Activated CD4-positive, alpha-beta T cell treated with anti-CD3 and anti-CD28 coated beads, Interleukin-2, amount 10 ng/mL, durations not matched to agents 24 days and 14 days (primary cell): ENCODE measurements at regions of chr3 and their contacts with region 1.

Region 1: GRCh38 chr3:192816351-192816750 is 89.0 kb upstream of the FGF12 start:
- DNase-seq: peak; percentile 68
- H3K4me3 Mint-ChIP-seq: no peak overlapping the region
- H3K27ac Mint-ChIP-seq: peak overlapping the region; percentile 26
- H3K4me1 Mint-ChIP-seq: peaks cover 52% of the 10 kb centered on the region
- H3K27me3 Mint-ChIP-seq: peaks cover 2% of the 10 kb centered on the region

Region 2: DNA sequence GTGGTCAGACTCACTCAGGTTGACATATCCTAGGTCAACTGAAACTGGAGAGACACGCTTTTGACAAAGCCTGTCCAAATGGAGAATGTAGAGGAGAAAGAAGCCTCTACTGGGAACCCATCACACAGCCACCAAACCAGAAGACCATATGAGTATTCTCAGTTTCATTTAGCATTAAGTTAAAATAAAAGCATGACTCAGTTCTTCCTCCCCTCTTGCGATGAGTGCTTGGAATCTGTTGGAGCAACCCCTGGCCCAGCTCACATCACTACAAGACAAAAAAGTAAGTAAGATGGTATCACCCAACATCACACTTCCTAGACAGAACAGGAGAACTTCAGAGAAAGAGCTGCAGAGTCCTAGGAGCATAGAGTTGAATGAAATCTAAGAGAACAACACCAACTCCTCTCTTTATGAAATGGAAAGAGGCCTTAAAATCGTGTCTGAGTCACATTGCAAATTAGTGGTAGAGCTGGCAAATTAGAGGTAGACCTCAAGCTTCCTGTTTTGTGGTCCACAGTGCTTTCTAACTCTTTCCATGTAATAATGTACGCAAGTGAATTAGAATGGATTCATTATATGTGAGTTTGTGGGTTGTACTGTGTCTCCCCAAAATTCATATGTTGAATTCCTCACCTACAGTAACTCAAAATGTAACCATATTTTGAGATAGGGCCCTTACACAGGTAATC is 140.2 kb before region 1 on chr3:
- intact Hi-C with region 1: loop called (anchors 1 kb)
- DNase-seq: peak; percentile 57
- H3K4me3 Mint-ChIP-seq: peak overlapping the region; percentile 36
- H3K27ac Mint-ChIP-seq: peak overlapping the region; percentile 94
- H3K4me1 Mint-ChIP-seq: peaks cover 7% of the 10 kb centered on the region
- H3K27me3 Mint-ChIP-seq: peaks cover 14% of the 10 kb centered on the region

Region 3: GRCh38 chr3:192851821-192852424 is 35.6 kb after region 1 on chr3:
- intact Hi-C with region 1: loop called (anchors 1 kb)
- DNase-seq: no peak
- H3K4me3 Mint-ChIP-seq: no peak overlapping the region
- H3K27ac Mint-ChIP-seq: peak overlapping the region; percentile 27
- H3K4me1 Mint-ChIP-seq: peaks cover 45% of the 10 kb centered on the region
- H3K27me3 Mint-ChIP-seq: no peaks in the 10 kb centered on the region

Region 4: DNA sequence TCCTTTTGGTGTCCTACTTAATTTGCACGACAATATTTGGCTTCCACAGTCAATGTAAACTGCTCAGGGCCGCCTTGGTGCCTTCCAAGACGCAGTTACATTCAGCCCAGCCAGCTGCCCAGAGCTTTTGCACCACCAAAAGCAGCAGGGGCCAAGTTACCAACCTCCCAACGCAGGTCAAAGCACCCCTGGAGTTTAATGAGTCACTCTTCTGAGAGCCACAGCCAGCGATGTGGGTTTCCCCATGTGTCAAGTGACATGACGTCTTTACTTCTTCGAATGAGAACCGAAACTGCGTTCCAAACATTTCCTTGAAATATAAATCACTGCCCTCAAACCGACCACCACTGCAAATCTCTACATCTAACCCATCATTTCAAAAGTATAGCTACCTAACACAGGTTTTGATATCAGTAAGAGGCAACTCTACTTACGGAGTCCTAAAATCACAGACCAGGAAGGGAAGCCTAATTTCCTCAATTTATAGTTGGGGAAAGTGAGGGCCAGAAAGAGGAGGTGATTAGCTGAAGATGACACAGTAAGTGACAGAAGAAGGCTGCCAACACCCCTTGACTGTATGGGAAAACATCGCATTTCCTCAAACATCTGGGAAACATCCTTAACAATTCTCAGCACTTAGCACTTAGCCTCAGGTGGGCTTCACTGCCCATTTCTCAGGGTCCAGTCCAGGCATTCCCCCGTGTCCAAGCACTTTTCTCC is 76.8 kb after region 1 on chr3:
- intact Hi-C with region 1: loop called (anchors 1 kb)
- DNase-seq: peak; percentile 94
- H3K4me3 Mint-ChIP-seq: peak overlapping the region; percentile 62
- H3K27ac Mint-ChIP-seq: peak overlapping the region; percentile 84
- H3K4me1 Mint-ChIP-seq: peaks cover 81% of the 10 kb centered on the region
- H3K27me3 Mint-ChIP-seq: peaks cover 20% of the 10 kb centered on the region

Region 5: DNA sequence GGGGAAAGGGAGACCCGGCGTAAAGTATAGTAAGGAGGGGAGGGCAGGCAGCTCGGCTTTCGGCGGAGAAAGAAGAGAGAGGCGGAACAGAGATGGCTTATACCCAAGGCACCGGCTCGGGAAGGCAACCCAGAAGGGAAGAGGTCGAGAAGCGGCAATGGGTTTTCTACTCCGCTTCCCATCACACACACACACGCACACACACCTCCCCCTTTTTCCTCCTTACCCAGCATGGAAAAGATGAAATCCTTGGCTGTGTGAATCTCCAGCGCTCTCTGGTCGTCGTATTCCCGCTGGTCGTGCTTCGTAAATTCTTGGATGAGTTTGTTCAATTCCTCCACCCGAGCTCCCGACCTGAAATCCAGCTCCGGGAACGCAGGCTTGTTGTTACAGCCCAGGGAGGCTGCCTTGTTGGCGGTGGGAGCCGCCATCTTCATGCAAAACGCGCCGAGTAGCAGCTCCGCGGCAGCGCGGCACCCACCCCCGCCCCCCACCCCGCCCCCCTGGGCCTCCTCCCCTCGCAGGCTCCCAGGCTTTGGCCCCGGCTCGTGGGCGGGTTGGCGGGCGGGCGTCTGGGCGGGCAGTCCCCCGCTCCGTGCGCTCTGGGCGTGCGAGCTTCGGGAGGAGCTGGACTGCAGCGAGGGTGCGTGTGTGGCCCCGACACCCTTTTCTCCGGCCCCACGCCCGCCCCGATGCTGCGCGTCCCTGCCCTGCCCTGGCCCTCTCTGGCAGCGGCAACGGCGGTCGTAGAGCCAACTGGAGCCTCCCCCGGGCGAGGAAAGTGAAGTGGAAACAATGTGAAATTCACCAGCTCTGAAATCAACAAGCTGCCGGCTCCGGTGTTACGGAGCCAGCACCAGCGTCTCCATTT is 101.3 kb after region 1 on chr3 and contains the start of gene MB21D2:
- intact Hi-C with region 1: loop called (anchors 1 kb)
- DNase-seq: peak; percentile 91
- H3K4me3 Mint-ChIP-seq: peak within 1 kb of the TSS; percentile 96
- H3K27ac Mint-ChIP-seq: peak within 1 kb of the TSS; percentile 92
- H3K4me1 Mint-ChIP-seq: peaks cover 46% of the 10 kb centered on the region
- H3K27me3 Mint-ChIP-seq: peaks cover 49% of the 10 kb centered on the region
- total RNA-seq, gene MB21D2: 8.6 and 9.4 TPM in 2 replicates

Region 6: DNA sequence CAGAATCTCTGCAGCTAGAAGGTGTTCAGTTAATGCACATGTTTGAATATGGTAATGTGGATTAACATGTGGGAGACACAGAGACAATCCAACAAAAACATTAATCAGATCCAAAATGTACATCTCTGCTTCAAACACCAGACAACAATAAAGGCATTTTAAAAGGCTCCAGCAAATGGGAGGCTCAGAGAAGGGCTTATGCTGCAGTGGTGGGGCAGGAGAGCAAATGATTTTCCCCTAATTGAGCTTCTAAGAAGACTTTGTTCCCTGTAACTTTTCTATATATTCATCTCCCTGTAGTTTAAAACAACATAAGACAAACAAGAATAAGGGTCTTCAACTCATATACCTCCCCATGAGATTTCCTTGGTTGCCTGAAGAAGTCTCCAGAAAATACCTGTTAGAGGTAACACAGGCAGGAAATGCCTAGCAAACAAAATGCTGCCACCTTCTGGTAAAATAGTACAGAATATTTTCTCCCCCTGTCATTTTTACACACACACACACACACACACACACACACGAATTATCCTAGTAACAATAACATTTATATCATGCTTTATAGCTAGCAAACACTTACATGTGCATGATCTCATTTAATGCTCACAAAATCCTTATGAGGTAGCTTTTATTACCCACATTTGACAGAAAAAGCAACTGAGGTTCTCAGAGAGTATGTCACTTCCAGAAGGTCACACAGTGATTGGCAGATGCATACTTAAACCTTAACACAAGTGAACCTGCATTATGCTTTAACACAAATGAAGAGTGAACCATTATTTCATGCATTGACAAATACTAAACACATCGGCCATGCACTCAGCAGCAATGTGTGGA is 224.7 kb after region 1 on chr3:
- intact Hi-C with region 1: loop called (anchors 1 kb)
- DNase-seq: peak; percentile 64
- H3K4me3 Mint-ChIP-seq: no peak overlapping the region
- H3K27ac Mint-ChIP-seq: peak overlapping the region; percentile 26
- H3K4me1 Mint-ChIP-seq: peaks cover 8% of the 10 kb centered on the region
- H3K27me3 Mint-ChIP-seq: peaks cover 17% of the 10 kb centered on the region